K562 (cell line): ENCODE measurements at regions of chr17 and their contacts with region 1.

Region 1: DNA sequence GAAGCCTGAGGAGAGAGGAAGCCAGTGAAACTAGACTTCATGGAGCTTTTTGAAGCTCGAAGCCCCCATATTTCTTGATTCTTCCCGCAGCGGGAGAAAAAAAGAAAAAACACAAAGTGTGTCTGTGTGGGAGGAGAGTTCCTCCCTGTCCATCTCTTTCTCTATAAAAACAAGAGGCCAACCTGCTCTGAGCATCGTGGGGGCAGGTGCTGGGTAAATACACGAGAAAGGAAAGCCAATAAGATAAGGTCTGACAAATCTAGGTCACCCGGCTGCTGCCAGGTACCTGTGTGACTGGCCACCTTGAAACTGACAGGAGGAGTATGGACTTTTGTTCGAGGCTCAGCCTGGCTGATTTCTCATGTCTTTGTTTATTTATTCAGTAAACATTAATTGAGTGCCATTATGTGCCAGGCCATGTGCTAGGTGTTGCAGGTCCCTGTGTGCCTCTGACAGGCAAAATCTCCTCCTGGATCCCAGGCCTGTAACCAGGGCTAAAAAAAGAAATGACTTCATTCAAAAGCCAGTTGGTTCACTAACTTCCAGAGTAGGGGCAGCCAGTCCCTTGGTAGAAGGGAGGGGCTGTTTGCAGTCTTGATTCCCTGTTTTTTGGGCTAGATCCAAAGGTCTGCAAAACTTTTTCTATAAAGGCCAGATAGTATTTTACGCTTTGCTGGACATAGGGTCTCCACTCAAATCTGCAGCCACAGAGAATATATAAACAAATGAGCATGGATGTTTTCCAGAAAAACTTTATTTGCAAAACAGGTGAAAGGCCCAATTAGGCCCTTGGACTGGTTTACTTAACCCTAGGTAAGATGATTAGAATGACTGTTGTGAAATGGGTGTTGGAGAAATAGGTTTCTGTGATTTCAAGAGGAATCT is 35.6 kb downstream of the YPEL2 start:
- DNase-seq: no peak
- ATAC-seq: no peak
- H3K4me3 ChIP-seq: no peak overlapping the region
- H3K27ac ChIP-seq: no peak overlapping the region
- H3K4me1 ChIP-seq: peaks cover 3 to 20% of the 10 kb centered on the region in 2 experiments; a peak in 4 of 5 replicates
- H3K27me3 ChIP-seq: peaks cover 4% of the 10 kb centered on the region in 2 experiments; a peak in 2 of 5 replicates
- CTCF ChIP-seq: no peak
- EP300 ChIP-seq: no peak
- POLR2A ChIP-seq: no peak
- RAD21 ChIP-seq: no peak

Region 2: DNA sequence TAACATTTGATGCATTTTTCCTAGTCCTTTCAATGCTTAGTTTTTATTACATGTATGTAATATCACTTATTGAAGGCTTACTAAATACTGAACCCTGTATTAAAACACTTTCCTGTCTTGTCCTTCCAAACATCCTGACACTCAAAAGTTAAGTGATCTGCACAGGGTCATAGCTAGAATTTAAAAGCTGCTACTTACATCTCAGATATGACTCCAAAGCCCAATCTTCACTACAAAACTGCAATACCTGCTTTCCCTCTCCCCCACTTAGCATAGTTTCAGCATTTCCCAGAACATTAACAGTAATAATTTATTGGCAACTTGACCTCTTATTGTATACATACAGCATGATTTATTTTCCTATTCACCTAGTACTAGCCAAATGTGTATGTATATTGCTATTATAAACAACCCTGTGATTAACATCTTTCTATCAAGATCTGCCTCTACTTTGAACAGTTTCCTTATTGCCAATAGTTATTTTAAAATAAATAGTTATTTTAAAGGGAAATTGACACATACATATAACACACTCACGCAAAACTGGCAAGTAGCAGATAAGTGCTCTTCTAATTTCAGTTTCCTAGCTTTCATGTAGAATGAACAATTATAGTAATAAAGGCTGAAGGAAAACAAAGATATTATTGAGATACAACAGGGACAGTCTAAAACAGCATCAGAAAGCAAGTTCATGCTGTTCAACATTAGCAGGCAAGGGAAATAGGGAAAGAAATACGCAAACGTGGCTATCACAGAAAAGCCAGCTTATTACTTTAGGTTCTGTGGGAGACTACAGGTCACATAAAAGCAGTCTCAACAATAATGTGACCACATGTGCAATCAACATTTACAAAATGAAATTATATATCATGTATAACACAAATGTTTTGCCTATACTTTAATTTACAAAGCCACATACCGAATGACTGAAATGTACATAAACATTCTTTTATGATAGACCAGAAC is 255.8 kb before region 1 on chr17:
- CTCF ChIA-PET with region 1: no interaction called
- POLR2A ChIA-PET with region 1: no interaction called
- in situ Hi-C with region 1: no loop called
- intact Hi-C with region 1: no loop called
- DNase-seq: no peak
- ATAC-seq: no peak
- H3K4me3 ChIP-seq: no peak overlapping the region
- H3K27ac ChIP-seq: no peak overlapping the region
- H3K4me1 ChIP-seq: peaks cover 3 to 11% of the 10 kb centered on the region in 2 experiments; a peak in 3 of 5 replicates
- H3K27me3 ChIP-seq: no peaks in the 10 kb centered on the region
- CTCF ChIP-seq: no peak
- EP300 ChIP-seq: no peak
- POLR2A ChIP-seq: no peak
- RAD21 ChIP-seq: no peak

Region 3: DNA sequence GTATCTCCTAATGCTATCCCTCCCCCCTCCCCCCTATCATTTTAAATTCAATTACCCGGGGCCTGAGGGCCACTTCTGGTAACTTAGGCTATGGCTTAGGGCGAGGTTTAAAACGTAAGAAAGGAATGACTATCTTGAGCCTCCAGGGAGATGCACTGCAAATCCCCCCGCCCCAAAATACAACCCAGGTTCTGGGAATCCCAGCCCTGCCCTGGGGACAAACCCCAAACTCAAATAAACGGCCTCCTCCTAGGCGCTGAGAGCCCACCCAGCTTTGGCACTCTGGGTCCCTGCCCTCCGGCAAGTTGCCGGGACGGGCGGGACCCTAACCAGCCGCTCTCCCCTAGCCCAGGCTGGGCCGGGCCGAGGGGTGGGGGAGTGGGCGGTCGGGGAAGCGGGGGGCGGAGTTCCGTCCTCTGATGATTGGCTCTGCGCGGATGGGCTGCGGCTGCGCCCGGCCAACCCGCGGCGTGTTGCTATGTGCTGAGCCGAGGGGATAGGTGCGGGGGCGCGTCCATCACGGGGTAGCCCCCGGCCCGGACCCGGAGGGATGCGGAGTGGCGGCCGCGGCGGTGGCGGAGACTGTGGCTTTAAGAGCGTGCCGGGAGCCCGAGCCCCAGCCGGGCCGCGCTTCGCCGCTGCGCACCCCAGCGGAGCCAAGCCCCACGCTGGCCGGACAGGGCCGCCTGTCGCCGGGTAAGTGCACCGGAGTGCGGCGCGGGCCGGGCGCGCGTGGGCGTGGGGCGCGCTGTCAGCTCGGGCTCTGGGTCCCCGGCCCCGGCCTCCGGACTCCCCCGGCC is 35.7 kb before region 1 on chr17 and contains the start of gene YPEL2:
- CTCF ChIA-PET with region 1: no interaction called
- POLR2A ChIA-PET with region 1: interaction called, 3 read pairs
- in situ Hi-C with region 1: no loop called
- intact Hi-C with region 1: loop called (anchors 5 kb)
- DNase-seq: peak; percentile 91 to 99 (median 98)
- ATAC-seq: peak; percentile 98
- H3K4me3 ChIP-seq: peak within 1 kb of the TSS; percentile 51
- H3K27ac ChIP-seq: no peak within 1 kb of the TSS
- H3K4me1 ChIP-seq: peaks cover 16 to 23% of the 10 kb centered on the region in 2 experiments; a peak in 4 of 5 replicates
- H3K27me3 ChIP-seq: peaks cover 30 to 34% of the 10 kb centered on the region in 2 experiments
- CTCF ChIP-seq: no peak
- EP300 ChIP-seq: no peak
- POLR2A ChIP-seq: no peak
- RAD21 ChIP-seq: no peak
- polyA plus RNA-seq, gene YPEL2: 0.11 to 0.13 TPM

Region 4: GRCh38 chr17:59400858-59401257 is 33.8 kb after region 1 on chr17:
- CTCF ChIA-PET with region 1: no interaction called
- POLR2A ChIA-PET with region 1: interaction called, 4 read pairs
- in situ Hi-C with region 1: no loop called
- intact Hi-C with region 1: loop called (anchors 5 kb)
- DNase-seq: no peak
- ATAC-seq: no peak
- H3K4me3 ChIP-seq: no peak overlapping the region
- H3K27ac ChIP-seq: no peak overlapping the region
- H3K4me1 ChIP-seq: no peaks in the 10 kb centered on the region
- H3K27me3 ChIP-seq: peaks cover 3 to 15% of the 10 kb centered on the region in 2 experiments
- CTCF ChIP-seq: no peak
- EP300 ChIP-seq: no peak
- POLR2A ChIP-seq: no peak
- RAD21 ChIP-seq: no peak

Region 5: DNA sequence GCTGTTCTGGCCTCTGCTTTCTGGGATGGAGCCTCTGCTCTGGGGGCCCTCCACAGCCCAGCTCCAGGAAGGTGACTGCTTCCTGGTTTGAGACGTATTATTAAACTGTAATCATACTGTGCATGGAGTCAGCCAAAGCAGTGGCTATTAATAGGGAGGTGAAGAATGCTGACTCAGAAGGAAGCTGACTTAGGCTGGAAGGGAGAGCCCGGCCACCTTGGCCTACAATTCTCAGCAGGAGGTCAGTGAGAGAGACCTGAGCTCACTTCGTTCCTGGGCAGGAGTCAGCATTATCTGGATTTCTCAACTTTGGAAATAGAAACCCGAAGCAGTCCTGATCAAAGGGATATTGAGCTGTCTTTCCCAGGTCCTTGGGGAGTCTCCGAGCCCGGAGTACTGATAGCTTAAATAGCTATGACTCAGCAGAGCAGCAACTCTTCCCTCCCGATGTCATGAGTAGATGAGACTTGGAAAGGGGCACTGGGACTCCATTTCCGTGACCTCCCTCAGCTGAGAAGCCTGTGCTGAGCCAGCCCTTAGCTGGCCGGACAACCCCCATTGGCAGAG is 56.2 kb after region 1 on chr17:
- CTCF ChIA-PET with region 1: no interaction called
- POLR2A ChIA-PET with region 1: no interaction called
- in situ Hi-C with region 1: no loop called
- intact Hi-C with region 1: loop called (anchors 5 kb)
- DNase-seq: peak; percentile 71 to 79 (median 78)
- ATAC-seq: peak; percentile 92
- H3K4me3 ChIP-seq: no peak overlapping the region
- H3K27ac ChIP-seq: peak overlapping the region; percentile 24; the same call in 2 of the 3 replicates
- H3K4me1 ChIP-seq: peaks cover 13 to 20% of the 10 kb centered on the region in 2 experiments; a peak in 4 of 5 replicates
- H3K27me3 ChIP-seq: peaks cover 3 to 14% of the 10 kb centered on the region in 2 experiments; a peak in 3 of 5 replicates
- CTCF ChIP-seq: no peak
- EP300 ChIP-seq: peak; percentile 42; the same call in 1 of the 2 replicates
- POLR2A ChIP-seq: no peak
- RAD21 ChIP-seq: no peak